ENCODE measurements at regions of chr2 and their contacts with region 1.

Region 1: DNA sequence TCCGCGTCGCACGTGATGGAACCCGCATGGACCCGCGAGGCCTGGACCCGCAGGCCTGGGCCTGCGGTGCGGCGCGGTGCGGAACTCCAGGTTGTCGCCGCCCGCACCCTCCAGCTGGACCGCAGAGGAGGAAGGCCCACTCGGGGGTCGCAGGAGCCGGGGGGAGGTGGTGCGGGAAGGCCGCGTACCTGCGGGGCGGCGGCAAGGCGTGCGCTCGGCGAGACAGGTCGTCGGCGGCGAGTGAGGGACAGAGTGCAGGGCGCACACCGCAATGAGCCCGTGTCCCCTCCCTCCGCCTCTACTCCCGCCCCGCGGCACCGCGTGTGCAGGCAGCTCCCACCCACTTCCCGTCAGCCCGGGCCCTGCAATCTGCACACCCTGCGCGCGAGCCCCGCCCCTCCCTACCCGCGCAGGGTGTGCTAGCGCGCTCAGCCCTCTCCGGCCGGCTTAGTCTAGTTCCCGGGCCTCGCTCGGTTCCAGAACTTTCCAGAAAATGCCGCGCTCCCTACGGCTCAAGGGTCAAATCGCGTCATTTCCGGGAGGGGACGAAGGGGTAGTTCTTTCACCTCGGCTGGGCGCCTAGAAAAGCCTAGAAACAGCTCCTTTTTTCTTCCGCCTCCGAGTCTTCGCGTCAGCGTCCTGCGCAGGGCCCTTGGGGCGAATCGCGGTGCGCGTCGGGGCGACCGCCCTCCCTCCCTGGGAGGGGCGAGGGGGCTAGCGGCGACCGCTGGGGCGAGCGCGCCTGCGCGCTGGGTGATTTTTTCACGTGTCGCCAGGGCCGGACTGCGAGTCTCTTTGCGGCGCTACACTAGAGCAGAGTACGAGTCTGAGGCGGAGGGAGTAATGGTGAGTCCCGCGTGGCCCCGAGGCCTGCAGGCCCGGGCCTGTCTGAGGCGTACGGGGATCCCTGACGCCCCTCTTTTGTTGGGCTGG is at the starts of genes HSPD1 and HSPE1:
- DNase-seq: peak; percentile 99
- ATAC-seq: peak; percentile 81
- H3K4me3 ChIP-seq: peak within 1 kb of the TSS; percentile 89
- H3K27ac ChIP-seq: peak within 1 kb of the TSS; percentile 85
- H3K4me1 ChIP-seq: peaks cover 36% of the 10 kb centered on the region
- H3K27me3 ChIP-seq: no peaks in the 10 kb centered on the region
- CTCF ChIP-seq: no peak
- total RNA-seq, gene HSPD1: 396 and 410 TPM in 2 replicates
- total RNA-seq, gene HSPE1: 266 and 321 TPM in 2 replicates

Region 2: DNA sequence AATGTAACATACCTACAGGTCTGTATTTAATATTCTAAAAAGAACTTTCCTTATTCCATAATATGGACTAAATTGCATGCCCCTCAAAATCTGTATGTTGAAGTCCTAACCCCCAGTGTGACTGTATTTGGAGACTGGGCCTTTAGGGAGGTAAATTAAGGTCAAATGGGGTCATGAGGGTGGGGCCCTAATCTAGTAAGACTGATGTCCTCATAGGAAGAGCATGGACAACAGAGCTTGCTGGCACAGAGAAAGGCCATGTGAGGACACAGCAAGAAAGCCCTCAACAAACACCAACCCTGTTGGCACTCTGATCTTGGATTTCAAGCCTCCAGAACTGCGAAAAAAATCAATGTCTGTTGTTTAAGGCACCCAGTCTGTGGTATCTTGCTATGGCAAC is 83.6 kb before region 1 on chr2:
- CTCF ChIA-PET with region 1: no interaction called
- POLR2A ChIA-PET with region 1: no interaction called
- intact Hi-C with region 1: loop called (anchors 10 kb)
- DNase-seq: no peak
- ATAC-seq: no peak
- H3K4me3 ChIP-seq: no peak overlapping the region
- H3K27ac ChIP-seq: no peak overlapping the region
- H3K4me1 ChIP-seq: no peaks in the 10 kb centered on the region
- H3K27me3 ChIP-seq: no peaks in the 10 kb centered on the region
- CTCF ChIP-seq: no peak

Region 3: GRCh38 chr2:197453161-197453914 is 46.5 kb before region 1 on chr2 and contains the start of gene COQ10B:
- CTCF ChIA-PET with region 1: no interaction called
- POLR2A ChIA-PET with region 1: interaction called, 3 read pairs
- intact Hi-C with region 1: loop called (anchors 1 kb)
- DNase-seq: peak; percentile 99
- ATAC-seq: peak; percentile 95
- H3K4me3 ChIP-seq: peak within 1 kb of the TSS; percentile 84
- H3K27ac ChIP-seq: peak within 1 kb of the TSS; percentile 92
- H3K4me1 ChIP-seq: peaks cover 11% of the 10 kb centered on the region
- H3K27me3 ChIP-seq: no peaks in the 10 kb centered on the region
- CTCF ChIP-seq: no peak
- total RNA-seq, gene COQ10B: 23.5 and 25.7 TPM in 2 replicates

Region 4: DNA sequence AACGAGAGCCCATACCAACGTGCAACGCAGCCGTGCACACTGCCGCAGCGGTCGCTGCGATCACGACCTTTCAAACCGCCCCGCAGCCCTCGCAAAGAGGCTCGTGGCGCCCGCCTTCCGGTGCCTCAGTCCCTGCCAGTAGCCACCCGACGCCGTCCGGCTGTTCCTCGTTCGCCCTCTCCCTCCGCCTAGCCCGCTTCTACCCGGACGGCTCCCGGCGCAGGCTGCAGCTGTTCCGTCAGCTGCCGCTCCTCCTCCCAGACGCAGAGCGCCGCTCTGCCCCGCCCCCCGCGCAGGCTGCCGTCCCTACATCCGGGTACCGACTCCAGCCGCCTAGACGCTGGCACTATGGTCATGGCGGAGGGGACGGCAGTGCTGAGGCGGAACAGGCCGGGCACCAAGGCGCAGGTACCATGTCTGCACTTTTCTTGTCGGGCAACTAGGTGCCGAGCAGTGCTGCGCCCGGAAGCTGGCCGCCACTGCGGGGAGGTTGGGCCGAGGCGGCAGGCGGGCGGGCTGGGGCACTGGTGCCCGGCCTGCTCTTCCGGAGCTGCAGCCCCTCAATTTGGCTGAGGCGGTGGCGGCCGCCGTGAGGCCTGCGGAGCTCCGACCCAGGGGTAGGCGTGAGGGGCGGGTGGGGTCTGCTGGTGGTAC is 16.0 kb after region 1 on chr2 and contains the start of gene MOB4:
- CTCF ChIA-PET with region 1: no interaction called
- POLR2A ChIA-PET with region 1: interaction called, 7 read pairs
- intact Hi-C with region 1: loop called (anchors 1 kb)
- DNase-seq: peak; percentile 95
- ATAC-seq: peak; percentile 92
- H3K4me3 ChIP-seq: peak within 1 kb of the TSS; percentile 89
- H3K27ac ChIP-seq: peak within 1 kb of the TSS; percentile 48
- H3K4me1 ChIP-seq: peaks cover 17% of the 10 kb centered on the region
- H3K27me3 ChIP-seq: no peaks in the 10 kb centered on the region
- CTCF ChIP-seq: no peak
- total RNA-seq, gene MOB4: 16.8 and 24.9 TPM in 2 replicates

Region 5: DNA sequence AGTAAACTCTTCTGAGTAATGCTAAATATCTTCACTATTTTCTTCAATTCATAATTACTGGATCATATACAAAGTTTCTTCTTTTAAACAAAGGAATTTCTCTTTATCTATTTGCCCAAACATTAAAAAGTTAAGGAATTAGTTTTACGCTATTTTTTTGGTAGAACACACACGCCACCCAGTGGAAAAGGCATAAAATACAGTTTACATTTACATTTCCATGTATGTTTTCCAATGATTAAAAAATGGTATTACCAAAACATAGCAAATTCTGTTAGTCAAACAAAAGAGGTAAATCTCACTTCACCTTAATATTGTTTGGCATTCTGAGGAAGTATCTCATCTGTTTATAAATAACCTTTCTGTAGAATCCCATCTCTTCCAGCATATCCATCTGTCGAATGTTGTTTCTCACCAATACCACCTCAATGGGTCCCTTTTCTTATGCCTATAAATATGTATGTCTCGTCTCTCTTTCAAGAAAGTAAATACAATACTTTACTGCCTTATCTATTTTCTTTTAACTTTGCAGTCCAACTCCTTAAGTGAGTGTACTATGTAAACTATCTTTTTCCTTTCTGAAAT is 278.1 kb after region 1 on chr2:
- CTCF ChIA-PET with region 1: no interaction called
- POLR2A ChIA-PET with region 1: no interaction called
- intact Hi-C with region 1: loop called (anchors 5 kb)
- DNase-seq: peak; percentile 66
- ATAC-seq: no peak
- H3K4me3 ChIP-seq: no peak overlapping the region
- H3K27ac ChIP-seq: no peak overlapping the region
- H3K4me1 ChIP-seq: no peaks in the 10 kb centered on the region
- H3K27me3 ChIP-seq: no peaks in the 10 kb centered on the region
- CTCF ChIP-seq: peak; percentile 89

Measured in PC-3 (cell line).